Dendritic cell treated with granulocyte-macrophage colony-stimulating factor and Interleukin-4, amounts not matched to agents 40 ng/mL and 50 ng/mL, for 4 days (primary cell): ENCODE measurements at regions of chr12 and their contacts with region 1.

Region 1: DNA sequence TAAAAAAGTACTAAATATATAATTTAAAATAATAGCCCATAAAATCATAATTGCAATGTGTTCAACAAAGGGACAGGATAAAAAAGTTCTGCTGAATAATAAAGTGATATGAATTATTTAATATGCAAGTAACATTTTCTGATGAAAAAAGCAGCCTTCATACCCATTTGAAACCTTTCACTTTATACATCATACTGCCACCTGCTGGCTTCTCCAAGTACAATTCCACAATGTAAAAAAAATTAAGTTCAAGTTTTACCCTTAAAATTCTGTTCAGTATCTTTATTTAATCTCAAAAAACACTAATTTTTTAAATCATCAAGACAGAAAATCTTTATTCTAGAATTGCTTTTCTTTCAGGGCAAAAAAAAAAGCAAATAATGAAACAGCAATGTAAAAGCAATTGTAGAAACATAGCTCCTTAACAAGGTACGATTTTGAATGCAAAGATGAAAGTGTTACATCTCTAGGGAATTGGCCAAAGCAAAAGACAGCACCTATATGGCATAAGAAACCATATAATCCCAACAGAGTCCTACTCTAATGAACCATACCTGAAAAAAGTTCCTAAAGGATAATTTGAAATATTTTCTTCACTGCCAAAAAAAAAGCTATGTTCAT is 15.0 kb downstream of the MDM1 start:
- H3K4me3 Mint-ChIP-seq: no peak overlapping the region
- H3K27ac Mint-ChIP-seq: no peak overlapping the region
- H3K4me1 Mint-ChIP-seq: no peaks in the 10 kb centered on the region
- H3K27me3 Mint-ChIP-seq: no peaks in the 10 kb centered on the region

Region 2: GRCh38 chr12:68040450-68041075 is 276.6 kb before region 1 on chr12:
- intact Hi-C with region 1: loop called (anchors 5 kb)
- H3K4me3 Mint-ChIP-seq: no peak overlapping the region
- H3K27ac Mint-ChIP-seq: no peak overlapping the region
- H3K4me1 Mint-ChIP-seq: peaks cover 5% of the 10 kb centered on the region
- H3K27me3 Mint-ChIP-seq: no peaks in the 10 kb centered on the region

Region 3: DNA sequence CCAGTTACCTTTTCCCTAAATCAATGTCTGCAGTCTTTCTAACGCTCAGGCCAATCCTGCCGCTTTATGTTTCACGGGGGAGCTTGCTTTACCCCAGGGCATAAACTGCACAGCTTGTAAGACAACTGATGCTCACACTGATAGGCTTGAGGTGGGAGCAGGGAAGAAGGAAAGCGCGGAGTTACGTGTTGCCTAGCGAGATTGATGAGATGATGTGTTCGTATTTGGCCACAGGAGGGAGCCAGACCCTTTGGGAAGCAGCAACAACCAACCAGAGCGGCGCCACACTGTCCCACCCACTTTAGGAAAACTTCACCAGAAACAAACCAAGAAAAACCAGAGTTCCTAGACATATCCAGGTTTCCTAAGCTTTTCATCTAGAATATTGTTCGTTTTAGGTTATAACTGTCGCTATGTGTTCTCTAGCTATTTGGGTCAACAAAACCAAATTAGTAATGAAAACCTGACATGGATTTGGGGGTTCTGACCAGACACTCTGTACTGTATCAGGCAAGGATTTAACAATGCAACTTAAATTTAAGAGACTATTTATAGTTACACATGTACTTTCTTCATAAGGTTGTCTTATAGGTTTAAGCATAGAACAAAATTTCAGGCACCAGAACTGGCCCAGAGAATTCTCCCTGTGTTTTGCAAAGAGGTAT is 93.9 kb before region 1 on chr12:
- intact Hi-C with region 1: loop called (anchors 1 kb)
- H3K4me3 Mint-ChIP-seq: no peak overlapping the region
- H3K27ac Mint-ChIP-seq: no peak overlapping the region
- H3K4me1 Mint-ChIP-seq: no peaks in the 10 kb centered on the region
- H3K27me3 Mint-ChIP-seq: peaks cover 13% of the 10 kb centered on the region